H1 (cell line): ENCODE measurements at regions of chr14 and their contacts with region 1.

Region 1: GRCh38 chr14:74905375-74906142 is 17.5 kb downstream of the RPS6KL1 start:
- DNase-seq: peak in 1 of 2 experiments; percentile 95
- H3K4me3 ChIP-seq: no peak overlapping the region
- H3K27ac ChIP-seq: no peak overlapping the region
- H3K4me1 ChIP-seq: no peaks in the 10 kb centered on the region; a peak in 1 of 7 replicates
- H3K27me3 ChIP-seq: no peaks in the 10 kb centered on the region
- CTCF ChIP-seq: peak; percentile 84 to 97 (median 92)
- EP300 ChIP-seq: no peak
- POLR2A ChIP-seq: peak in 1 of 2 experiments; percentile 57; a peak in 1 of 3 replicates
- RAD21 ChIP-seq: peak; percentile 69 to 73

Region 2: DNA sequence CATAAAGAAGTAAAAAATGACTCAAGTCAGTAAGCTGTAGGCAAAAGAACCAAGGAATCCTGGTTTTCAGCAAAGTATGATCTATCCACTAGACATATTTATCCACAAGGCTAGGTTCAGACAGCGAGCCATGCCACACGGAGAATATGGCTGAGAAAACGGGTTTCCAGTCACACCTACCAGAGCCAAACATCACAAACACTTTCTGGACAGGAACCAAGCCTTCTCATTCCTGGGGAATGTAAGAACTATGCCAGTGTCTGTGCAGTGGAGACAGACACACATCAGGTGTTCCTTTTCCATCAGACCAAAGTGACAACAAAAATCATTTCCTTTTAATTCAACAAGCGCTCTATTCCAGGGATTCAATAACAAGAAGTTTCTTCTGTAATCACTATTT is 233.8 kb before region 1 on chr14:
- CTCF ChIA-PET with region 1: no interaction called
- POLR2A ChIA-PET with region 1: no interaction called
- DNase-seq: no peak
- H3K4me3 ChIP-seq: no peak overlapping the region
- H3K27ac ChIP-seq: no peak overlapping the region
- H3K4me1 ChIP-seq: no peaks in the 10 kb centered on the region
- H3K27me3 ChIP-seq: no peaks in the 10 kb centered on the region
- CTCF ChIP-seq: no peak
- EP300 ChIP-seq: no peak
- POLR2A ChIP-seq: no peak
- RAD21 ChIP-seq: no peak

Region 3: DNA sequence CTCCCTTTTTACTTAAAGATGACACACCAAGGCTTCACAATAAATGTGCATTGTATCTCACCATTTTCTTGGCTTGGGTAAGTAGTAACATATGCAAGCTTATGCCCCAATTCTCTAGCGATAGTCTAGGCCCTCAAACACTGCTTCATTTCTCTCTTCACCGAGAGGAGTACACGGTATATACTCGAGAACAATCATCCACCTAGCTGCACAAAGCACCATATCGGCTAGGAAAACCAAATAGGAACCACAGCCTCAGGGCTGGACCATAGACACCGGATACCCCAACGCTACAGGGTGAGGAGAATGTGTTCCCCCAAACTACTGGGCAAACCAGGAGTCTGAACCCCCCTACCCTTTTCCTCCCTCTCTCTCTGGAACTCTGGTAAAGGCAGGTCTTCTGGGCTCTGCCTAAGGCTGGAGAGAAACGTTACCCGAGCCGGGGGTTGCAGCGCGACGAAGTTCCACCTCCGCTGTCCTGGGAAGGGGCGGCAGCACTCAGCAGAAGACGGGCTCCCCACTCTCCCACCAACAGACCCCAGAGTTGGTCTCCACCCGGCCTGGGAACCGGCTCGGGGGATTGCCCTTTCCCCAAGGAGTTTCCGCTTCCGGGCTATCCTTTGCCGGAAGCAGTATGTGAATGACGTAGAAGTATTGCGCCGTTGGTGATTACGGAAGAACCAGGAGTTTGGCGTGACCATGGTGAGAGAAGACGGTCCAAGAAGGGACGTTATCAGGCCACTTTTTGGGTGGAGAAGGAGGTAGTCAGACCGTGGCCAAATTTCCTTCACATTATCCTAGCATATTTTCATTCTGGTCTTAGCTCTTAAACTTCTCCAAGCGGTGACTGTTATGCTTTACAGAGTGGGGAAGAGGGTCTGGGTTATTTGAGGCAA is 192.8 kb before region 1 on chr14 and contains the starts of genes AREL1 and FCF1:
- CTCF ChIA-PET with region 1: no interaction called
- POLR2A ChIA-PET with region 1: no interaction called
- DNase-seq: peak; percentile 29 to 86
- H3K4me3 ChIP-seq: peak within 1 kb of the TSS; percentile 85 to 98 (median 91)
- H3K27ac ChIP-seq: peak within 1 kb of the TSS; percentile 69
- H3K4me1 ChIP-seq: no peaks in the 10 kb centered on the region
- H3K27me3 ChIP-seq: no peaks in the 10 kb centered on the region
- CTCF ChIP-seq: no peak
- EP300 ChIP-seq: no peak
- POLR2A ChIP-seq: peak; percentile 64 to 91
- RAD21 ChIP-seq: no peak
- total RNA-seq, gene AREL1: 31.4 and 31.5 TPM in 2 replicates
- total RNA-seq, gene FCF1: 81.1 and 84.3 TPM in 2 replicates

Region 4: DNA sequence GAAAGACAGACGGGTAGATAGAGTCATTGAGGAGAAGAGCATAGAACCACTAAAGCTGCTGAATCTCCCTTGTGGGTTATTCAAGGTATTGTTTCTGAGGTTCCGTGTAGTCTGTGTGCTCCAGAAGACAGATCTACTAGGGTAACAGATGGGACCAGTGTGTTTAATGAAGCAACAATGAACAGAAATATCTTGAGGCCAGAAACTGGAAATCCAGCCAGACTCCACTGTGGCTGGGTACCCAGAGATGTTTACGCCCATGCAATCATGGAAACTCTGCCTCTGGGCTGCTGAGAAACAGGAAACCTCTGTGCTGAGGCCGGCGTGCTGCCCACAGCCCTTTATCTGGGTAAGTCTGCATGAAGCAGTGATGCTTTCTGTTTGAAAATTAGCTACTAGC is 37.9 kb before region 1 on chr14:
- CTCF ChIA-PET with region 1: interaction called, 509 read pairs
- POLR2A ChIA-PET with region 1: interaction called, 80 read pairs
- DNase-seq: no peak
- H3K4me3 ChIP-seq: no peak overlapping the region
- H3K27ac ChIP-seq: no peak overlapping the region
- H3K4me1 ChIP-seq: no peaks in the 10 kb centered on the region
- H3K27me3 ChIP-seq: no peaks in the 10 kb centered on the region
- CTCF ChIP-seq: no peak
- EP300 ChIP-seq: no peak
- POLR2A ChIP-seq: no peak
- RAD21 ChIP-seq: no peak

Region 5: GRCh38 chr14:74881431-74882361 is 23.9 kb before region 1 on chr14 and contains the start of gene DLST:
- CTCF ChIA-PET with region 1: interaction called, 52 read pairs
- POLR2A ChIA-PET with region 1: interaction called, 57 read pairs
- DNase-seq: peak; percentile 63 to 95
- H3K4me3 ChIP-seq: peak within 1 kb of the TSS; percentile 79 to 98 (median 91)
- H3K27ac ChIP-seq: peak within 1 kb of the TSS; percentile 79; the same call in 1 of the 2 replicates
- H3K4me1 ChIP-seq: peaks cover 11 to 26% (median 19%) of the 10 kb centered on the region in 4 experiments
- H3K27me3 ChIP-seq: no peaks in the 10 kb centered on the region
- CTCF ChIP-seq: no peak
- EP300 ChIP-seq: peak in 1 of 2 experiments; percentile 100; a peak in 2 of 3 replicates
- POLR2A ChIP-seq: peak; percentile 57 to 81
- RAD21 ChIP-seq: no peak; a peak in 1 of 4 replicates
- total RNA-seq, gene DLST: 111 and 117 TPM in 2 replicates

Region 6: GRCh38 chr14:74917646-74918081 is 12.1 kb after region 1 on chr14:
- CTCF ChIA-PET with region 1: interaction called, 36 read pairs
- POLR2A ChIA-PET with region 1: interaction called, 16 read pairs
- DNase-seq: no peak
- H3K4me3 ChIP-seq: no peak overlapping the region
- H3K27ac ChIP-seq: no peak overlapping the region
- H3K4me1 ChIP-seq: no peaks in the 10 kb centered on the region; a peak in 1 of 7 replicates
- H3K27me3 ChIP-seq: no peaks in the 10 kb centered on the region
- CTCF ChIP-seq: no peak
- EP300 ChIP-seq: no peak
- POLR2A ChIP-seq: no peak
- RAD21 ChIP-seq: no peak

Region 7: GRCh38 chr14:74932401-74932901 is 26.9 kb after region 1 on chr14:
- CTCF ChIA-PET with region 1: interaction called, 26 read pairs
- POLR2A ChIA-PET with region 1: interaction called, 5 read pairs
- DNase-seq: no peak
- H3K4me3 ChIP-seq: no peak overlapping the region
- H3K27ac ChIP-seq: no peak overlapping the region
- H3K4me1 ChIP-seq: peaks cover 0 to 5% (median 0%) of the 10 kb centered on the region in 4 experiments; a peak in 1 of 7 replicates
- H3K27me3 ChIP-seq: no peaks in the 10 kb centered on the region
- CTCF ChIP-seq: no peak
- EP300 ChIP-seq: no peak
- POLR2A ChIP-seq: no peak
- RAD21 ChIP-seq: no peak

Region 8: DNA sequence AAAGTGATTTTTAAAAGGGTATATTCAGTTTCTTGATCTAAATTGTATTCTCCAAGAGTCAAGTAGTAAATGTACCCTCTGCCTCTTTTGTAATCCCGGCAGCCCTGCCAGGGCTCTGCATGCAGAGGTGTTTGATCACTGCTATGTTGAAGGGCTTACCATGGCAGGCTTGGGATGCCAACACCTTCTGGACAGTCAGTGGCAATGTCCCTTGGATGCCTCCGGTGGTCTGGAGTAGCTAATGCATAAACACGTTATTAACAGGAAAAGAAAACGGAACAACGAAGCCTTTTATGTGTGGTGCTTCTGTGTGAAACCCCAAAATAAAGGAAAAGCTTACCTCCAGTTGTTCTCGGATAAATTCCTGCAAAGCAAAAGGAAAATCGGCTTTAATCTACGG is 117.1 kb after region 1 on chr14:
- CTCF ChIA-PET with region 1: interaction called, 11 read pairs
- POLR2A ChIA-PET with region 1: no interaction called
- DNase-seq: no peak
- H3K4me3 ChIP-seq: no peak overlapping the region
- H3K27ac ChIP-seq: no peak overlapping the region
- H3K4me1 ChIP-seq: no peaks in the 10 kb centered on the region
- H3K27me3 ChIP-seq: no peaks in the 10 kb centered on the region
- CTCF ChIP-seq: peak; percentile 61 to 66 (median 64)
- EP300 ChIP-seq: no peak
- POLR2A ChIP-seq: no peak
- RAD21 ChIP-seq: peak; percentile 63 to 72